Lower leg skin (tissue), 4 donors: ENCODE measurements at regions of chr22 and their contacts with region 1.

Region 1: DNA sequence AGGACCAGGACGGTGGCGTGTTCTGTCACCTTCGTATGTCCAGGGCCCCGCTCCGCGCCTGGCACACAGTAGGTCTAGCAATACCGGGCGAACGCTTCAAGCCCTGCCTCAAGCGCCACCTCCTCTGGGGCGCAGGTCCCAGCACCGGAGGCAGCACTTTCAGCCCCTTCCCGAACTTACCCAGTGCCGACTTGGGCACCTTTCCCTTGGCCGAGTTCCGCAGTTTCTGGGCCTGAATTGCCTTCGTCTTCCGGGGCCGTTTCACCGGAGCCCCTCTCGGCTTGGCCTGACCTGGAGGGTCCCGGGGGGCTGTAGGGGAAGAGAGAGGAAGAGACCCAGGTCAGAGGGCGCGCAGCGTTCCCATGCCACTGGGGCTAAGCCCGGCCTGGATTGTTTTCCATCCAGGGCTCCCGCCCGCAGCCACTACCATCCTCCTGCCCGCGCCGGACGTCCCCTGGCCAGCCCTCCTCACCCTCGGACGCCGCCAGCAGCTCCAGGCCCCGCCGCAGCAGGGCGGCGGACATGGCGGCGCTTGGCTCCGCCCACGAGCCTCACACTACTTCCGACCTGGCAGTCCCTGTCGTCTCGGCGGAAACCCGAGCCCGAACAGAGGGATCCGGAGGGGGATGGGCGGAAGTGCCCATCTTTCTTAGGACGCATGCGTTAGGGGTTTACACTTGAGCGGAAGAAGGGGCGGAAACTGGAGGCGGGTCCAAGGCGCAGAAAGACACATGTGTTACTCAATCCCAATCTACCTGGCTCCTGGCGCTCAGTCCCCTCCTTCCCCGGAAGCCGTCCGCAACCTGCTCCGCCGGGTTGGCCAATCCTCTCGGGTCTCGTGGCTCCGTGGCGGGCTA is at the start of gene RPS19BP1:
- DNase-seq: peak; percentile 100
- H3K4me3 ChIP-seq: peak within 1 kb of the TSS; percentile 87
- CTCF ChIP-seq: no peak
- POLR2A ChIP-seq: peak in 1 of 2 donors; percentile 35
- total RNA-seq, gene RPS19BP1: 93.4 to 157 (median 121) TPM

Region 2: DNA sequence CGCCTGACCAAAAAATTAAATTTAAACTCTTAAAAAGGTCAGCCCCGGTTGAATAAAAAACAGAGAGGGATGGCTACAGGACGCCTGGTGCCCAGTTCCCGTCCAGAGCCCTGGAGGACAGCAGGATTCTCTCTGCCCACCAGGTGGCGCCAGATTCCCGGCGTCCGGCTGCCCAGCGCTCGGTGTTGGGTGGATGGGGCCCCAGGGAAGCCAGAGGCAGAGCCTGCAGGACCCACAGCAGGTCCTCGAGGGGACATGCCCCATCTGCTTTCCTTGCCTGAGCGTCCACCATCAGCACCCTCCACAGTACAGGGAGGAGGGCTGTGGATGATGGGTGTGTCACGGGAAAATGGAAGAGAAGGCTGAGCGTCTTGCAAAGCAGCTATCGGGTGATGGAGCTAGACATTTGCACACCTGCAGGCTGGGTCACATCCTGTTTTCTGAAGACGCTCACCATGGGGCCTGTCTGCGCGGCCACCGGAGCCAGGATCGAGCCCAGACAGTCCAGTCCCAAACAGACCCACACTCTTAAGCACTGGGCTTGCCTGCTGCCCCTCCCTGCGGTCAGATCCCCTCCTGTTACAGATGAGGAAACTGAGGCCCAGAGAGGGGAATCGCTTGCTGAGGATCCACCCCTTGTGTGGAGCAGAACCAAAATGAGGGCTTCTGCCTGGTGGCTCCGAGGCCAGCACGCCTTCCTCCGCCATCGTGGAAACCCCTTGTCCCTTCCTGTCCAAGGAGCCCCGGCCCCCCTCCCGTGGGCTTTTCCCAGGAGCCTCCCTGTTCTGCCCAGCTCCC is 361.4 kb before region 1 on chr22:
- intact Hi-C with region 1: loop called (anchors 5 kb)
- DNase-seq: peak; percentile 70 to 97
- H3K4me3 ChIP-seq: no peak overlapping the region
- CTCF ChIP-seq: peak in 2 of 3 donors; percentile 62 to 89
- POLR2A ChIP-seq: no peak

Region 3: GRCh38 chr22:39292561-39293098 is 239.8 kb before region 1 on chr22:
- intact Hi-C with region 1: no loop called
- DNase-seq: peak; percentile 91 to 97
- H3K4me3 ChIP-seq: no peak overlapping the region
- CTCF ChIP-seq: no peak
- POLR2A ChIP-seq: no peak

Region 4: DNA sequence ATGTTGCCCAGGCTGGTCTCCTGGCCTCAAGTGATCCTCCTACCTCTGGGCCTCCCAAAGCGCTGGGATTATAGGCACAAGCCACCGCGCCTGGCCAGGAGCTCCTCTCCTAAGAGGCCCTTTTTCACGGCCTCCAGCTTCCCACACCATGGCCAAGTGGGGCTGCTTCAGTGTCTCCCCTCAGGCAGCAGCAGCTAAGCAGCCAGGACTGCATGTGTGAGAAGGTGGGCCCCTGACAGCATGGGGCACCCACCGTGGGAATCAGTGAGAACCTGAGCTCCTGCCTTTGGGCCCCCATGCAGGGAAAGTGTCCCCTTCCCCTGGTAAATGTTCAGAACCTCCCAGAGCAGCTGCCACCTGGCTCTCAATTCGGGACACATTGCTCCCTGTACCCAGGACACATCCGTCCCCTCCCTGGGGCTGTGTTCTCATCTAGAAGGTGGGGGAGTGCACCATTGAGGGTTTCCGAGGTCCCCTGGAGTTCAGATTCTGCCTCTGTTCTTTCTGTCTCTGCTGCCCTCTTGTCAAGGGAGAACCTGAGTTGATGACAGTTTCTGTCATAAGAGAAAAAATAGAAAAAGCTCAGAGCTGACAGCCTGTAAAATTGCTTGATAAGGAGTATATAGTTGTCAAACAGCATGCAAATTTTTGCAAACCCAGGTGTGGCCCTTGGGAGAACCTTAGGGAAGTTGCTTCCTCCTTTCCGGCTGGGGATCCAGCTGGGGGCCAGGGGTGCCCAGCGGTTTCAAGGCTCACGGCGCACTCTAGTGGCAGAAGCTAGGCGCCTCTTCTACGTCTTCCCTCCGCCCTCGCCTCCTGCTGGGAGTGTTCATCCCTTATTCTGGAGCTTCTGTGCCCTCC is 492.0 kb after region 1 on chr22:
- intact Hi-C with region 1: loop called (anchors 10 kb)
- DNase-seq: no peak
- H3K4me3 ChIP-seq: no peak overlapping the region
- CTCF ChIP-seq: peak in 1 of 3 donors; percentile 25
- POLR2A ChIP-seq: no peak

Region 5: GRCh38 chr22:40346178-40347118 is 814.0 kb after region 1 on chr22 and contains the start of gene ADSL:
- intact Hi-C with region 1: loop called (anchors 10 kb)
- DNase-seq: peak; percentile 82 to 97
- H3K4me3 ChIP-seq: peak within 1 kb of the TSS; percentile 49
- CTCF ChIP-seq: no peak
- POLR2A ChIP-seq: peak in 1 of 2 donors; percentile 16
- total RNA-seq, gene ADSL: 26.7 to 49.0 (median 36.6) TPM